Dorsolateral prefrontal cortex (tissue), 120 donors: ENCODE measurements at regions of chr1 and their contacts with region 1.

Region 1: GRCh38 chr1:184075055-184076029 is 23.8 kb downstream of the TSEN15 start:
- DNase-seq: peak in 3 of 10 donors; percentile 10 to 53 (median 36)
- H3K4me3 ChIP-seq: no peak overlapping the region
- H3K27ac ChIP-seq: peak overlapping the region in 55 of 59 donors; percentile 21 to 86 (median 69)
- H3K27me3 ChIP-seq: no peaks in the 10 kb centered on the region
- CTCF ChIP-seq: peak; percentile 69 to 98 (median 84)

Region 2: GRCh38 chr1:183537405-183537804 is 537.9 kb before region 1 on chr1:
- intact Hi-C with region 1: no loop called
- DNase-seq: no peak
- H3K4me3 ChIP-seq: no peak overlapping the region
- H3K27ac ChIP-seq: no peak overlapping the region
- H3K27me3 ChIP-seq: no peaks in the 10 kb centered on the region
- CTCF ChIP-seq: no peak

Region 3: DNA sequence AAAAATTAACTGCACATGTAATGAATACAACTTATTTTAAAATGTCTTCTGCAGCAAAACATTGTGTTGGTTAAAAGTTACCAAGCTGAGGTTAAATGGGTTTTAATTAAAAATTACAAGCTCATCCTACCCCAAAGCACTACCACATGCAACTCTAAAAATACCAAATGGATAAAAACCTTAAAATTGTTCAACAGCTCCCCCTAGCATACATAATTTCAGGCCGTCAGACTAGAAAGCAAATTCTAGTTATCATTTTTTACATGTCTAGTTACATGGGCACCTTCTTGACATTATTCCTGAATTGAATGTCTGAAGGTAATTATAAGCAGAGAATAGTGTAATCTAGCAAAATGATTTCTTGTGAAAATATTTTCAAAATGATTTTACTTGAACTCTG is 488.0 kb after region 1 on chr1:
- intact Hi-C with region 1: loop called in 1 of 2 experiments (anchors 10 kb)
- DNase-seq: no peak
- H3K4me3 ChIP-seq: no peak overlapping the region
- H3K27ac ChIP-seq: peak overlapping the region in 2 of 59 donors; percentile 1 to 12
- H3K27me3 ChIP-seq: no peaks in the 10 kb centered on the region
- CTCF ChIP-seq: peak; percentile 34 to 75 (median 56)

Region 4: GRCh38 chr1:184672013-184672726 is 596.8 kb after region 1 on chr1:
- intact Hi-C with region 1: loop called (anchors 5 to 10 kb)
- DNase-seq: peak in 1 of 10 donors; percentile 36
- H3K4me3 ChIP-seq: no peak overlapping the region
- H3K27ac ChIP-seq: peak overlapping the region in 2 of 59 donors; percentile 1 to 7
- H3K27me3 ChIP-seq: no peaks in the 10 kb centered on the region
- CTCF ChIP-seq: no peak

Region 5: GRCh38 chr1:184691719-184692324 is 616.5 kb after region 1 on chr1:
- intact Hi-C with region 1: loop called in 1 of 2 experiments (anchors 5 kb)
- DNase-seq: peak in 1 of 10 donors; percentile 23
- H3K4me3 ChIP-seq: no peak overlapping the region
- H3K27ac ChIP-seq: peak overlapping the region in 1 of 59 donors; percentile 20
- H3K27me3 ChIP-seq: no peaks in the 10 kb centered on the region
- CTCF ChIP-seq: peak; percentile 48 to 85 (median 71)